Activated naive CD8-positive, alpha-beta T cell treated with anti-CD3 and anti-CD28 coated beads, Interleukin-2, amount 10 ng/mL, durations not matched to agents 7 days and 5 days (primary cell): ENCODE measurements at regions of chr11 and their contacts with region 1.

Region 1: GRCh38 chr11:30322826-30323710 is at the start of gene ARL14EP:
- DNase-seq: peak; percentile 89
- ATAC-seq: peak; percentile 92
- H3K4me3 Mint-ChIP-seq: peak within 1 kb of the TSS; percentile 96
- H3K27ac Mint-ChIP-seq: peak within 1 kb of the TSS; percentile 94
- H3K4me1 Mint-ChIP-seq: peaks cover 35% of the 10 kb centered on the region
- H3K27me3 Mint-ChIP-seq: peaks cover 6% of the 10 kb centered on the region
- total RNA-seq, gene ARL14EP: 39.0 to 43.6 TPM

Region 2: DNA sequence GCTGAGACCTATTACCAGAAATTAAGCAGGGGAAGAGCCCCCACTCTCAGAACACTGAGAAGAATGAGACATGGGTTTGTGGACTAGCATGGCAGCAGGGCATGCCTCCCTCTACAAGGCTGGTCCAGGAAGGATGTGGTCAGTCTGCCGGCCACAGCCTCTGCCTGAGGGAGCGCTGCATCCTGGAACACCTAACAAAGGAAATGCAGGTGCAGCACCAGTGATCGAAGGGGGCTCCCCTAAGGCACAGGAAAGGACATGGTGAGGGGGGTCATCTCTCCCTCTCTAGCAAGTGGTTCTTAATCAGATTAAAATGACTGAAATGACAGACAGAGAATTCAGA is 40.8 kb before region 1 on chr11:
- POLR2A ChIA-PET with region 1: interaction called, 10 read pairs
- DNase-seq: peak; percentile 70
- ATAC-seq: peak; percentile 90
- H3K4me3 Mint-ChIP-seq: peak overlapping the region; percentile 73
- H3K27ac Mint-ChIP-seq: peak overlapping the region; percentile 83
- H3K4me1 Mint-ChIP-seq: peaks cover 27% of the 10 kb centered on the region
- H3K27me3 Mint-ChIP-seq: no peaks in the 10 kb centered on the region

Region 3: GRCh38 chr11:30304620-30305019 is 18.4 kb before region 1 on chr11:
- POLR2A ChIA-PET with region 1: no interaction called
- DNase-seq: no peak
- ATAC-seq: no peak
- H3K4me3 Mint-ChIP-seq: no peak overlapping the region
- H3K27ac Mint-ChIP-seq: no peak overlapping the region
- H3K4me1 Mint-ChIP-seq: no peaks in the 10 kb centered on the region
- H3K27me3 Mint-ChIP-seq: peaks cover 11% of the 10 kb centered on the region

Region 4: DNA sequence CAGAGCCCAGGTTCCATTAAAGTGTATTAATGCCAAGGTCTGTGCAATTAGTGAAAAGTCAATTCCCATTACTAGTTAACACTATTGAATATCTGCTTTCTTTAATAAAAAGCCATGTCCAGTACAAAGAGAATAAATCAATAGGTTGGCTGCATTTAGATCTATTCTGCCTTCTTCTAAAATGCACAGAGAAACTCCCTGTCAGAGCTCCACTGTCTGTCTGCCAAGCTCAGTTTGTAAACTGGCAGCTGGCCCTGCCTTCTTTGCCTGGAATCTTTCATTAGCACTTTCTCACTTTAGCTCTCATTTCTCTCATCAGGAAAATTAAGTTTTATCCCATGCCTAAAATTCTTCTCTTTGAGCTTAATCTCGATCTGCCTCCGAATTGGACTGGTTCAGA is 35.5 kb after region 1 on chr11:
- POLR2A ChIA-PET with region 1: no interaction called
- DNase-seq: no peak
- ATAC-seq: no peak
- H3K4me3 Mint-ChIP-seq: no peak overlapping the region
- H3K27ac Mint-ChIP-seq: no peak overlapping the region
- H3K4me1 Mint-ChIP-seq: no peaks in the 10 kb centered on the region
- H3K27me3 Mint-ChIP-seq: peaks cover 17% of the 10 kb centered on the region